AG04449 (cell line): ENCODE measurements at regions of chr9 and their contacts with region 1.

Region 1: GRCh38 chr9:131739980-131740648 is at the start of gene RAPGEF1:
- DNase-seq: no peak
- H3K4me3 ChIP-seq: peak within 1 kb of the TSS; percentile 63
- CTCF ChIP-seq: peak; percentile 74

Region 2: DNA sequence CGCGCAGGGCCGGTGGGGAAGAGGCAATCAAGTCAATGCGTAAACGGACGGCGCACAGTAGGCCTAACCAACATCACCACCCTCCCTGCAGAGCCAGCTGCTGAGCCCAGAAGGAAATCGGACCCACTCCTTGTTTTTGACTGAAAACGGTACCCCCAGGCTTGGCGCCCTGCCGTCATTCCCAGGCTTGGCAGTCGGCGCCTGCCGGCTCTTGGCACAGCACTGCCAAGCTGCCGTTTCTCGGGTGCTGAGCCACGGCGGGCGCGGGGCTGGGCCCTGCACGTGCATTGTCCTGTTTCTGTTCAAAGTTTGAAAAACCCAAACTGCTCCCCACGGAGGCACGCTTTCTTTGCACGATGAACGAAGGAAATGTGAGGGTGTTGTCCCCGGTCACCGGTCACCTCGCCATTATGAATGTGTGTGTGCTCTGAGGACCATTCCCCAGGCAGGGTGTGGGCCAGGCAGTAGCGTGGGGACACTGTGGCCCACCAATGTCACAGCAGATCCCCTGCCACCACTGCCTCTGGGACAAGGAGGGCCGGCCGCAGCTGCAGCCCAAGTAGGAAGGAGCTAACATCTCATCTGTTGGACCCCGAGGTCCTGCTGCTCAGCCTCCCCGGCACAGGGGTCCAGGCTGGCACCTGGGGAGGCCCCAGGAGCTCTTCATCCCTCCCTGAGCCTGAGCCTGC is 821.1 kb before region 1 on chr9:
- CTCF ChIA-PET with region 1: no interaction called
- POLR2A ChIA-PET with region 1: no interaction called
- DNase-seq: no peak
- H3K4me3 ChIP-seq: no peak overlapping the region
- CTCF ChIP-seq: no peak

Region 3: GRCh38 chr9:131585375-131585774 is 154.7 kb before region 1 on chr9:
- CTCF ChIA-PET with region 1: interaction called, 556 read pairs
- POLR2A ChIA-PET with region 1: no interaction called
- DNase-seq: no peak
- H3K4me3 ChIP-seq: no peak overlapping the region
- CTCF ChIP-seq: no peak

Region 4: DNA sequence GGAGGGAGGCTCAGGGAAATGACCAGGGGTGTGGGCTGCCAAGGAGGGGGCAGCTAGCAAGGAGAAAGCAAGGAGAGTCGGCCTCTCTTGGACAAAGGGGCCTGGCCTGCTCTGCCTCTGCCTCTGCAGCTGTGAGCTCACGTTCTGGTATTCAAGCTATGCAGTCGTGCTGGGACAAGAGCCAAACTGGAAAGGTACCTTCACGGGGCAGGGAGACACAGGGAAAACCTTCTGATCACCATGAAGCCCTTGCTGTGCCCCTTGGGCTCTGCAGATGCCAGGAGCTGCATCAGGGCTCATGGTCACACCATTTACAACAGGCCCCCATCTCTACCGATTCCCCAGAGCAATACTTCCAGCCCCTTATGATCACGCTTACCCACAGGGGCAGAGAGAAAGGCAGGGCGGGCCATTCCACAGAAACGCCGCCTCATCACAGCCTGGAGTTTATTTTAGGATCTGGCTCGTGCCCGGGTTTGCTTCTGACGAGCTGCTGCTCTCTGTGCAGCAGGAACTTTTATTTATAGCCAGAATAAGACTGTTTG is 131.5 kb before region 1 on chr9:
- CTCF ChIA-PET with region 1: interaction called, 193 read pairs
- POLR2A ChIA-PET with region 1: interaction called, 5 read pairs
- DNase-seq: peak; percentile 54
- H3K4me3 ChIP-seq: peak overlapping the region; percentile 43
- CTCF ChIP-seq: no peak

Region 5: GRCh38 chr9:131635285-131635684 is 104.8 kb before region 1 on chr9:
- CTCF ChIA-PET with region 1: interaction called, 19 read pairs
- POLR2A ChIA-PET with region 1: interaction called, 3 read pairs
- DNase-seq: peak; percentile 90
- H3K4me3 ChIP-seq: no peak overlapping the region
- CTCF ChIP-seq: peak; percentile 17

Region 6: GRCh38 chr9:131755541-131756198 is 15.6 kb after region 1 on chr9:
- CTCF ChIA-PET with region 1: interaction called, 139 read pairs
- POLR2A ChIA-PET with region 1: no interaction called
- DNase-seq: no peak
- H3K4me3 ChIP-seq: no peak overlapping the region
- CTCF ChIP-seq: peak; percentile 96

Region 7: GRCh38 chr9:131773911-131774379 is 33.8 kb after region 1 on chr9:
- CTCF ChIA-PET with region 1: no interaction called
- POLR2A ChIA-PET with region 1: no interaction called
- DNase-seq: no peak
- H3K4me3 ChIP-seq: no peak overlapping the region
- CTCF ChIP-seq: no peak

Region 8: GRCh38 chr9:131854896-131855613 is 114.9 kb after region 1 on chr9:
- CTCF ChIA-PET with region 1: no interaction called
- POLR2A ChIA-PET with region 1: no interaction called
- DNase-seq: peak; percentile 10
- H3K4me3 ChIP-seq: peak overlapping the region; percentile 36
- CTCF ChIP-seq: no peak